ENCODE measurements at regions of chr17 and their contacts with region 1.

Region 1: GRCh38 chr17:64020056-64020766 is at the start of gene ICAM2:
- DNase-seq: peak; percentile 69
- ATAC-seq: peak; percentile 78
- H3K4me3 Mint-ChIP-seq: peak within 1 kb of the TSS; percentile 97
- H3K27ac Mint-ChIP-seq: peak within 1 kb of the TSS; percentile 99
- H3K4me1 Mint-ChIP-seq: peaks cover 81% of the 10 kb centered on the region
- H3K27me3 Mint-ChIP-seq: no peaks in the 10 kb centered on the region
- CTCF ChIP-seq: no peak
- total RNA-seq, gene ICAM2: 44.5 and 44.7 TPM in 2 replicates

Region 2: DNA sequence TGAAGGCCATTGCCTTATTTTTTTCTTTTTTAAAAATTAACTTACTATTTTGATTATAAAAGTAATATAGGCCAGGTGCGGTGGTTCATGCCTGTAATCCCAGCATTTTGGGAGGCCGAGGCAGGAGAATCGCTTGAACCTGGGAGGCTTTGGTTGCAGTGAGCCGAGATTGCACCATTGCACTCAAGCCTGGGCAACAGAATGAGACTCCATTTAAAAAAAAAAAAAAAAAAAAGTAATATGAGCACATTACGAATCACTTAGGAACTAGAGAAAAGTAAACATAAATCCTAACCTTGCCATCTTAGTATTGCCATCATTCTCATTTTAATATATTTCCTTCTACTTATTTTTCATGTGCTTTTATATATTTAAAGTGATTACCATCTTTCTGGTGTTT is 432.4 kb before region 1 on chr17:
- CTCF ChIA-PET with region 1: no interaction called
- POLR2A ChIA-PET with region 1: no interaction called
- intact Hi-C with region 1: no loop called
- DNase-seq: no peak
- ATAC-seq: no peak
- H3K4me3 Mint-ChIP-seq: no peak overlapping the region
- H3K27ac Mint-ChIP-seq: no peak overlapping the region
- H3K4me1 Mint-ChIP-seq: no peaks in the 10 kb centered on the region
- H3K27me3 Mint-ChIP-seq: no peaks in the 10 kb centered on the region
- CTCF ChIP-seq: no peak

Region 3: GRCh38 chr17:63842540-63843386 is 177.4 kb before region 1 on chr17 and contains the start of gene SMARCD2:
- CTCF ChIA-PET with region 1: no interaction called
- POLR2A ChIA-PET with region 1: interaction called, 17 read pairs
- intact Hi-C with region 1: no loop called
- DNase-seq: peak; percentile 96
- ATAC-seq: peak; percentile 90
- H3K4me3 Mint-ChIP-seq: peak within 1 kb of the TSS; percentile 94
- H3K27ac Mint-ChIP-seq: peak within 1 kb of the TSS; percentile 95
- H3K4me1 Mint-ChIP-seq: peaks cover 49% of the 10 kb centered on the region
- H3K27me3 Mint-ChIP-seq: no peaks in the 10 kb centered on the region
- CTCF ChIP-seq: no peak
- total RNA-seq, gene SMARCD2: 114 and 117 TPM in 2 replicates

Region 4: DNA sequence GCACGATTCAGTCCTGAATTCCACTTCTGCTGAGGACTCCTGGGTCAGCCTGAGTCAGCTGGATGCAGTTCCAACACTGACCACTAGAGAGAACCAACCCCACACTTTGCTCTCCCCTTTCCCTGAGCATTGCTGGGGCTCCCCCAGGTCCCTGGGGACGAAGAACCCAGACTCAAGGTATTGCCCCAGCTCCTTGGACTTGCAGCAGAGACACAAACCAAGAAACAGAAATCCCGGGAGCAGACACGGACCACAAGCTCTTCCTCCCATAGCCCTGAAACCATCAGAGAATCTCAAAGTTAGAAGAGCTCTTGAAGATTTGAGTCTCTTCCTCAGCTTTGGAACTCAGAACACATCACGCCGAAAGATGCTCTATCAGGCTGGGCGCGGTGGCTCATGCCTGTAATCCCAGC is 100.9 kb before region 1 on chr17:
- CTCF ChIA-PET with region 1: interaction called, 116 read pairs
- POLR2A ChIA-PET with region 1: interaction called, 45 read pairs
- intact Hi-C with region 1: loop called (anchors 1 kb)
- DNase-seq: peak; percentile 65
- ATAC-seq: peak; percentile 49
- H3K4me3 Mint-ChIP-seq: peak overlapping the region; percentile 77
- H3K27ac Mint-ChIP-seq: peak overlapping the region; percentile 75
- H3K4me1 Mint-ChIP-seq: peaks cover 85% of the 10 kb centered on the region
- H3K27me3 Mint-ChIP-seq: no peaks in the 10 kb centered on the region
- CTCF ChIP-seq: no peak

Region 5: DNA sequence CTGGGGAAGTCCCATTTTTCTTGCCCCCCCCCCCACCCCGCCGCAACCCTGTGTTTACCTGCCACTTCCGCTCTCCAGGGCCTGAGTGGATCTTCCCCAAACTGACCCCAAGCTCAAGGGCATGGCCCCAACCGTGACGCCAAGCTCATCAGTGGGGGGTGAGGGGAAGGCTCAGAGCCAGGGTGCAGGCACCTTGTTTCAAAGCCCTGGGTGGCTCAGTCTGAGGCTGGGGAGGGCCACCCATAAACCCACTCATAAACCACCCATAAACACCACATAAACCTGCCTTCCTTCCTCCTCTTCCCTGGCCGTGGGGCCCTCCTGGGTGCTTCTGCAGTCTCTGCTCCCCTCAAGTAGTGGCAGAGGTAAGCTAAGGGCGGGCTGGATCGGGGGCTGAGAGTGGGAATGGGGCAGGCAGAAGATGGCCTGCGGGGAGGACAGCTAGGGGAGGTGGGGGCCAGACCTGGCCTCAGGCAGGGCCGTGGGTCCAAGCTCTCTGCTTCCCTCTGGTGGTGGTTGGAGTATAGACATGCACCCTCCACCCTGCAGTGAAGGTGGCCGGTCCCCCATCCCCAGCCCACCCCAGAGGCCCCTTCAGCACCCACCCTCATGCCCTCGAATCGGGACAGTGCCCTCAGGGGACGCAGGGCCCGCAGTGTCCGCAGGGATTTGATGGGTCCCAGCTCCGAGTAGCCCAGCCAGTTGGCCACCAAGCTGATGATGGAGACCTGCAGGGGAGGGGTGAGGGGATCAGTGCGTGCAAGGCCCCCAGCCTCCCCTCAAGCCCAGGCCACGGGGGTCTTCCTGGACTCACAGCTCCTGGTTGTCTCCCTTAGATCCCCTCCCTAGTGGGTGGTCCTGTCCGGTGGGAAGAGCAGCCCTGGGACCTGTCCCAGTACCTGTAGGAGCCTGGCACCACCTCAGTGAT is 73.5 kb before region 1 on chr17:
- CTCF ChIA-PET with region 1: interaction called, 79 read pairs
- POLR2A ChIA-PET with region 1: interaction called, 41 read pairs
- intact Hi-C with region 1: loop called (anchors 1 kb)
- DNase-seq: peak; percentile 67
- ATAC-seq: peak; percentile 72
- H3K4me3 Mint-ChIP-seq: peak overlapping the region; percentile 74
- H3K27ac Mint-ChIP-seq: peak overlapping the region; percentile 91
- H3K4me1 Mint-ChIP-seq: peaks cover 47% of the 10 kb centered on the region
- H3K27me3 Mint-ChIP-seq: no peaks in the 10 kb centered on the region
- CTCF ChIP-seq: no peak

Region 6: GRCh38 chr17:63998050-63998720 is 22.0 kb before region 1 on chr17 and contains the start of gene PRR29:
- CTCF ChIA-PET with region 1: interaction called, 17 read pairs
- POLR2A ChIA-PET with region 1: interaction called, 9 read pairs
- intact Hi-C with region 1: loop called (anchors 2 kb)
- DNase-seq: peak; percentile 67
- ATAC-seq: peak; percentile 73
- H3K4me3 Mint-ChIP-seq: peak within 1 kb of the TSS; percentile 87
- H3K27ac Mint-ChIP-seq: no peak within 1 kb of the TSS
- H3K4me1 Mint-ChIP-seq: peaks cover 32% of the 10 kb centered on the region
- H3K27me3 Mint-ChIP-seq: peaks cover 4% of the 10 kb centered on the region
- CTCF ChIP-seq: no peak
- total RNA-seq, gene PRR29: not detected in 2 replicates

Region 7: DNA sequence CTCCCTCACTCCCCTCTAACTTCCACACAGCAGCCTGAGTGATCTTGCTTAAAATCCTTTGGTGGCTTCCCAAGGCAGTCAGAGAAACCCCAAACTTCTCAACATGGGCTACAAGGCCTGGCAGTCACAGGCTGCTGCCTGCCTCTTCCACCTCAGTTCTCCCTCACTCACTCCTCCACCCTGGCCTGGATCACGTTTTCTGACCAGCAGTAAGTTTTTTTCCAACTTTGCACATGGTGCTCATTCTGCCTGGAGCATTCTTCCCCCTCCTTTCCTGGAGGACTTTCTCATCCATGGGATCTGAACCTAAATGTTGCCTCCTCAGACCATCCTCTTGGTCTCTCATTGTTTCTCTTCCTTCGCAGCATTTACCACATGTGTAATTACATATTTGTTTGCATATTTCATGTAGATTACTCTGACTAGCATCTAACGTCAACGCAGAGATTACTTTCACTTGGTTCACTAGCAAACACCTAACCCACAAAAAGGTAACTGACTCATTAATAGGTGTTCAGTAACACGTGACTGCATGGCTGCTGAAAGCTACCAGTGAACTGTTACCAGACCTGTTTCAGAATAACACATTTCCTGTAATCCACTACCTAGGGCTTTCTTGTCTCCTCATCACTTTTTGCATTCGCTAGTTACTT is 1019.3 kb after region 1 on chr17:
- CTCF ChIA-PET with region 1: no interaction called
- POLR2A ChIA-PET with region 1: interaction called, 12 read pairs
- intact Hi-C with region 1: no loop called
- DNase-seq: no peak
- ATAC-seq: peak; percentile 73
- H3K4me3 Mint-ChIP-seq: peak overlapping the region; percentile 53
- H3K27ac Mint-ChIP-seq: peak overlapping the region; percentile 85
- H3K4me1 Mint-ChIP-seq: peaks cover 92% of the 10 kb centered on the region
- H3K27me3 Mint-ChIP-seq: no peaks in the 10 kb centered on the region
- CTCF ChIP-seq: no peak